IMR-90 (cell line): ENCODE measurements at regions of chr14 and their contacts with region 1.

Region 1: DNA sequence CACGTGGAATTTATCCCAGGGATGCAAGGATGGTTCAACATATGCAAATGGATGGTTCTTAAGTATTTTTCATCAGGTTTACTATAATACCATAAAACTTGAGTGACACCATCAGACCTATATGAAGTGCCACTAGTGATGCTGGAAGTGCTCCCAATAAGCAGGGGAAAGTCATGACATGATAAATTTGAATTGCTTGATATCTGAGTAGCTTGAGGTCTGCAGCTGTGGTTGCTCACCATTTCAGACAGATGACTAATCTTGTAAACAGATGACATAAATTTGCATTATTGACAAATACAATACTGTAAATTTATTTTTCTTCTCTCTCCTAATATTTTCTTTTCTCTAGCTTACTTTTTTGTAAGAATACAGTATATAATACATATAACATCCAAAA is 13.7 kb upstream of the PRPF39 start:
- DNase-seq: peak; percentile 10
- ATAC-seq: no peak
- H3K4me3 ChIP-seq: no peak overlapping the region
- H3K27ac ChIP-seq: no peak overlapping the region
- H3K4me1 ChIP-seq: no peaks in the 10 kb centered on the region
- H3K27me3 ChIP-seq: no peaks in the 10 kb centered on the region
- CTCF ChIP-seq: no peak
- POLR2A ChIP-seq: no peak
- RAD21 ChIP-seq: no peak

Region 2: GRCh38 chr14:45003924-45004323 is 66.3 kb before region 1 on chr14:
- CTCF ChIA-PET with region 1: no interaction called
- POLR2A ChIA-PET with region 1: interaction called, 20 read pairs
- dilution Hi-C with region 1: no loop called
- in situ Hi-C with region 1: no loop called
- intact Hi-C with region 1: no loop called
- DNase-seq: no peak
- ATAC-seq: no peak
- H3K4me3 ChIP-seq: no peak overlapping the region
- H3K27ac ChIP-seq: no peak overlapping the region
- H3K4me1 ChIP-seq: no peaks in the 10 kb centered on the region
- H3K27me3 ChIP-seq: no peaks in the 10 kb centered on the region
- CTCF ChIP-seq: no peak
- POLR2A ChIP-seq: no peak
- RAD21 ChIP-seq: no peak

Region 3: GRCh38 chr14:45028107-45028626 is 42.0 kb before region 1 on chr14:
- CTCF ChIA-PET with region 1: interaction called, 3 read pairs
- POLR2A ChIA-PET with region 1: no interaction called
- dilution Hi-C with region 1: no loop called
- in situ Hi-C with region 1: no loop called
- intact Hi-C with region 1: loop called (anchors 5 kb)
- DNase-seq: no peak
- ATAC-seq: no peak
- H3K4me3 ChIP-seq: no peak overlapping the region
- H3K27ac ChIP-seq: no peak overlapping the region
- H3K4me1 ChIP-seq: no peaks in the 10 kb centered on the region
- H3K27me3 ChIP-seq: no peaks in the 10 kb centered on the region
- CTCF ChIP-seq: no peak
- POLR2A ChIP-seq: no peak
- RAD21 ChIP-seq: no peak

Region 4: DNA sequence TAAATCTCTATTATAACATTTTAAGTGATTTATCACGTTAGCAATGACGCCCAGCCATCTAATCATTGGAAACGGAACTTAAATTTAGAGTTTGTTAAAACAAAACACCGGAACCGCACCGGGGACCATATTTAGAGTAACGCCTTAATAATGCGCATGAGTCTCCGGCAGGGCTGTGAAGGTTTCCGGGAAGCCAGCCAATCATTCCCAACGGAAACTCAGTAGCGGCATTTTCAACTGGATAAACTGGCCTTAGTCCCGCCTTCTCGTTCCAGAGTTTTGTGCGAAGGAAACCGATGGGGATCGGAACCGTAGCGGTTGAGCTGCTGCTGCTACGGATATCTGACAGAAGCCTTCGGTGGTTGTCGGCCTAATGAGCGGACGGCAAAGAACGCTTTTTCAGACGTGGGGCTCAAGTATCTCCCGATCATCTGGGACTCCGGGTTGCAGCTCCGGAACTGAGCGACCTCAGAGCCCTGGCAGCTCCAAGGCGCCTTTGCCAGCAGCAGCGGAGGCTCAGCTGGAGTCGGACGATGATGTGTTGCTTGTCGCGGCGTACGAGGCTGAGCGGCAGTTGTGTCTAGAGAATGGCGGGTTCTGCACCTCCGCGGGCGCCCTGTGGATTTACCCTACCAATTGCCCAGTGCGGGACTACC is 65.6 kb after region 1 on chr14 and contains the start of gene FANCM:
- CTCF ChIA-PET with region 1: no interaction called
- POLR2A ChIA-PET with region 1: no interaction called
- dilution Hi-C with region 1: no loop called
- in situ Hi-C with region 1: no loop called
- intact Hi-C with region 1: no loop called
- DNase-seq: peak; percentile 98
- ATAC-seq: peak; percentile 58
- H3K4me3 ChIP-seq: peak within 1 kb of the TSS; percentile 82
- H3K27ac ChIP-seq: peak within 1 kb of the TSS; percentile 20
- H3K4me1 ChIP-seq: no peaks in the 10 kb centered on the region
- H3K27me3 ChIP-seq: no peaks in the 10 kb centered on the region
- CTCF ChIP-seq: no peak
- POLR2A ChIP-seq: no peak
- RAD21 ChIP-seq: no peak; the same call in 1 of the 2 replicates
- total RNA-seq, gene FANCM: 7.0 and 10.3 TPM in 2 replicates

Region 5: DNA sequence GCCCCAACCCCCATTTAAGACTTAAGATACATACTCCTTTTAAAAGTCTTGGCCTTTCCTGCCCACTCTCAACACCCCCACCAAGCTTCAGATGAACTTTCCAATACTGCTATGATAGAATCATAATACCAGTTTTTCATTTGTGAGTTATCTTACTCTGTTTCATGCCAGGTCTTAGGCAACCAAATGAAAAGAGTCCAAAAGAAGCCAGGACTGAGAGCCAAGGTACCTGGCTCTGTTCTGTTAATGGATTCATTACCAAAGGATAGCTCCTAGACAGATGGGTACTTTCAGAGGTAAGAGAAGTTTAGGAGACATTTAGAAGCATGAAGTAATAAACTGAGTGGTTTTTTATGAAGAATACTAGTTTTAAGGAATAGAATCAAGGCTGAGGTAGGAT is 99.7 kb after region 1 on chr14:
- CTCF ChIA-PET with region 1: no interaction called
- POLR2A ChIA-PET with region 1: no interaction called
- dilution Hi-C with region 1: no loop called
- in situ Hi-C with region 1: no loop called
- intact Hi-C with region 1: no loop called
- DNase-seq: no peak
- ATAC-seq: no peak
- H3K4me3 ChIP-seq: no peak overlapping the region
- H3K27ac ChIP-seq: no peak overlapping the region
- H3K4me1 ChIP-seq: no peaks in the 10 kb centered on the region
- H3K27me3 ChIP-seq: no peaks in the 10 kb centered on the region
- CTCF ChIP-seq: no peak
- POLR2A ChIP-seq: no peak
- RAD21 ChIP-seq: no peak

Region 6: GRCh38 chr14:45332360-45332988 is 262.3 kb after region 1 on chr14:
- CTCF ChIA-PET with region 1: no interaction called
- POLR2A ChIA-PET with region 1: no interaction called
- dilution Hi-C with region 1: no loop called
- in situ Hi-C with region 1: no loop called
- intact Hi-C with region 1: no loop called
- DNase-seq: no peak
- ATAC-seq: no peak
- H3K4me3 ChIP-seq: no peak overlapping the region
- H3K27ac ChIP-seq: no peak overlapping the region
- H3K4me1 ChIP-seq: no peaks in the 10 kb centered on the region
- H3K27me3 ChIP-seq: no peaks in the 10 kb centered on the region
- CTCF ChIP-seq: no peak
- POLR2A ChIP-seq: no peak
- RAD21 ChIP-seq: no peak